CD4-positive, alpha-beta T cell (primary cell): ENCODE measurements at regions of chr22 and their contacts with region 1.

Region 1: DNA sequence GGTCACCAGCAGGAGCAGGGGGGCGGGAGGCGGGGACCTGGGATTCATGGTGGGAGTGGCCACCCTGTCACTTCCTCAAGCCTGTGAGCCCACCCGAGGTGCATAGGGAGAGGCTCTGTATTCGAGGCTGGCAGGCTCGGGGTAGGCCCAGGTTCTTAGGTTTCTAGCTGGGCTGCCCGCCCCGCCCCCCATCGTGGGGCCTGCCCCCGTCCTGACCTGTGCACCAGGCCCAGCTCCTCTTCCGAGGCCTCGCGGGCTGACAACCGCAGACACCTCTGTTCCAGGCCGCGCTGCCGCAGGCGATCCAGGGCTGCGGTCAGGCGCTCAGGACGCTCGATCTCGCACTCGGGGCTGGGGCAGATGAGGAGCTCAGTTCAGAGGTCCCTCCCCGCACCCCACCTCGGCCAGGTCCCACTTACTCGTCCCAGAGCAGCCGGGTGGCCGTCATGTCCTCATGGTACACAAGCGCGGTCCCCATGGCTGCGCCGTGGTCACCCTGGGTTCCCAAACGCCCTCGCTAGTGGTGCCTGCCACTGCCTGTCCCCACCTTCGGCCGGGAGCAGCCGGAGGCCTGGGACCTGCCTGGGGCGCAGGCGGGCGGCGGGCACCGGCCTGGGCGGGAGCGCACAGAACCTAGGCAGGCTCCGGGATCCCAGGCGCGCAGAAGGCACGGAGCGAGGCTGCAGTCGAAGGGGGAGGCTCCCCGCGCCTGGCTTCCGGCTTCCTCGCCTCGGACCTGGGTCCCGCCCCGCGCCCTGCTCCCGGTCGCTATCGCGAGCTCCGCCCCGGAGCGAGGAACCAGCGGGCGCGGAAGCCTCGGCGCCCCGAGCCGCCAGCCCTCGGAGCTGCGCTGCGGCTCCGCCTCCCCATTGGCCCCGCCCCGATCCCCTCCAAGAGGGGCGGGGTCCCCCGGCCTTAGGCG is at the start of gene HDAC10:
- DNase-seq: peak; percentile 60 to 91 (median 77)
- ATAC-seq: peak; percentile 79
- H3K4me3 ChIP-seq: peak within 1 kb of the TSS; percentile 87
- H3K4me3 Mint-ChIP-seq: peak within 1 kb of the TSS; percentile 84
- H3K27ac ChIP-seq: peak within 1 kb of the TSS in 1 of 2 donors; percentile 53
- H3K27ac Mint-ChIP-seq: peak within 1 kb of the TSS; percentile 55
- H3K4me1 ChIP-seq: peaks cover 57% of the 10 kb centered on the region
- H3K4me1 Mint-ChIP-seq: peaks cover 26% of the 10 kb centered on the region
- H3K27me3 ChIP-seq: no peaks in the 10 kb centered on the region
- H3K27me3 Mint-ChIP-seq: no peaks in the 10 kb centered on the region
- CTCF ChIP-seq: no peak
- total RNA-seq, gene HDAC10: 87.3 to 88.7 TPM

Region 2: GRCh38 chr22:50282361-50282760 is 31.5 kb after region 1 on chr22:
- CTCF ChIA-PET with region 1: no interaction called
- POLR2A ChIA-PET with region 1: no interaction called
- intact Hi-C with region 1: no loop called
- DNase-seq: no peak
- ATAC-seq: no peak
- H3K4me3 ChIP-seq: no peak overlapping the region
- H3K4me3 Mint-ChIP-seq: no peak overlapping the region
- H3K27ac ChIP-seq: no peak overlapping the region
- H3K27ac Mint-ChIP-seq: no peak overlapping the region
- H3K4me1 ChIP-seq: no peaks in the 10 kb centered on the region
- H3K4me1 Mint-ChIP-seq: no peaks in the 10 kb centered on the region
- H3K27me3 ChIP-seq: no peaks in the 10 kb centered on the region
- H3K27me3 Mint-ChIP-seq: no peaks in the 10 kb centered on the region
- CTCF ChIP-seq: no peak

Region 3: GRCh38 chr22:50326959-50327710 is 76.3 kb after region 1 on chr22 and contains the start of gene DENND6B:
- CTCF ChIA-PET with region 1: interaction called, 4 read pairs
- POLR2A ChIA-PET with region 1: no interaction called
- intact Hi-C with region 1: loop called (anchors 1 kb)
- DNase-seq: peak; percentile 38 to 90 (median 62)
- ATAC-seq: peak; percentile 94
- H3K4me3 ChIP-seq: peak within 1 kb of the TSS; percentile 60
- H3K4me3 Mint-ChIP-seq: peak within 1 kb of the TSS; percentile 89
- H3K27ac ChIP-seq: no peak within 1 kb of the TSS
- H3K27ac Mint-ChIP-seq: peak within 1 kb of the TSS; percentile 35
- H3K4me1 ChIP-seq: peaks cover 15% of the 10 kb centered on the region
- H3K4me1 Mint-ChIP-seq: peaks cover 12% of the 10 kb centered on the region
- H3K27me3 ChIP-seq: no peaks in the 10 kb centered on the region
- H3K27me3 Mint-ChIP-seq: no peaks in the 10 kb centered on the region
- CTCF ChIP-seq: peak; percentile 30
- total RNA-seq, gene DENND6B: 1.8 to 1.9 TPM

Region 4: DNA sequence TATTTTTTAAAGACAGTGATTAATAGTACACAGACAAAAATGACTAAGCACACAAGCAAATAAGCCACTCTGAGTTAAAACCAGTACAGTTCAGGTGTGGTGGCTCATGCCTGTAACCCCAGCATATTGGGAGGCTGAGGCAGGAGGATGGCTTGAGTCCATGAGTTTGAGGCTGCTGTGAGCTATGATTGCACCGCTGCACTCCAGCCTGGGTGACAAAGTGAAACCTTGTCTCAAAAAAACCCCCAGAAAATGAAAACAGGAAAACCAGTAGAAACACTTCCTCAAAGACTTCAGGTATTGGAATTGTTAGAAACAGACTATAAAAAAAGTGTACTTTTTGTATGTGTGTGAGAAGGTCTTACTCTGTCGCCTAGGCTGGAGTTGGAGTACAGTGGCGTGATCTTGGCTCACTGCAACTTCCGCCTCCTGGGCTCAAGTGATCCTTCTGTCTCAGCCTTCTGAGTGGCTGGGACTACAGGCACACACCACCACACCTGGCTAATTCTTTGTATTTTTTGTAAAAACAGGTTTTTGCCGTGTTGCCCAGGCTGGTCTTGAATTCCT is 125.4 kb after region 1 on chr22:
- CTCF ChIA-PET with region 1: no interaction called
- POLR2A ChIA-PET with region 1: no interaction called
- intact Hi-C with region 1: no loop called
- DNase-seq: no peak
- ATAC-seq: no peak
- H3K4me3 ChIP-seq: no peak overlapping the region
- H3K4me3 Mint-ChIP-seq: no peak overlapping the region
- H3K27ac ChIP-seq: no peak overlapping the region
- H3K27ac Mint-ChIP-seq: no peak overlapping the region
- H3K4me1 ChIP-seq: peaks cover 8% of the 10 kb centered on the region
- H3K4me1 Mint-ChIP-seq: peaks cover 10% of the 10 kb centered on the region
- H3K27me3 ChIP-seq: no peaks in the 10 kb centered on the region
- H3K27me3 Mint-ChIP-seq: no peaks in the 10 kb centered on the region
- CTCF ChIP-seq: no peak